Activated T-helper 1 cell treated with anti-CD3 and anti-CD28 coated beads, Interleukin-12 subunit alpha, Interleukin-12 subunit beta, Interleukin-2, Interleukin-4 antibody, amounts not matched to agents 30 ng/mL and 10 ng/mL and 1 ng/mL, durations not matched to agents 14 hours and 24 hours and 36 hours (primary cell): ENCODE measurements at regions of chr10 and their contacts with region 1.

Region 1: GRCh38 chr10:90912174-90912573 is 8.7 kb downstream of the ANKRD1 start:
- DNase-seq: no peak
- H3K4me3 Mint-ChIP-seq: no peak overlapping the region
- H3K27ac Mint-ChIP-seq: no peak overlapping the region
- H3K4me1 Mint-ChIP-seq: no peaks in the 10 kb centered on the region
- H3K27me3 Mint-ChIP-seq: peaks cover 4% of the 10 kb centered on the region

Region 2: DNA sequence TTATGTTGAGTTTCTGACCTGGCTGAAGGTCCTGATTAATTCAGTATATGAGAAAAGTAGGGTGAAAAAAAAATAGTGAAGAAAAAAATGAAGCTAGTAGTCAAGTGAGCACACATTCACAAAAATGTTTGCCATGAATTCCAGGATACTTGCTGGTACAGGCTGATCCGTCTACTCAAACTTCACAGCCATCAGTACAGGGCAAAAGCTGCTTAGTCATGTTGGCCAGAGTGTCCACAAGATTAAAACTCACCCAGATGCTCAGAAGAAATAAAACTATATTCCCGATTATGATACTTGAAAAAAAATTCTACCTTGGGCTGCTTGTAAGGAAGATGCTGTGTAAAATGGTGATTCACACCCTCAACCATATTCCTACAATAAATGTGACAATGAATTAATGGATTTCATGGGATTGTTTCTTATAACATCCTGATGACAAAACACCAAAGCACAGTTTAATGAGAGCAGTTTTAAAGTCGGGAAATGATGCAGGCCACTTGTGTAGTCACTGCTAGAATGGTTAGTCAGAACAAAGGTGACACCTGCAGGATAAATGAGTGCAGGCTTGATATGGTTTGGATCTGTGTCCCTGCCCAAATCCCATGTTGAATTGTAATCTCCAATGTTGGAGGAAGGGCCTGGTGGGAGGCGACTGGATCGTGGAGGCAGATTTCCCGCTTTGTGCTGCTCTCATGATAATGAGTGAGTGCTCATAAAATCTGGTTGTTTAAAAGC is 57.9 kb after region 1 on chr10:
- intact Hi-C with region 1: loop called (anchors 5 kb)
- DNase-seq: no peak
- H3K4me3 Mint-ChIP-seq: no peak overlapping the region
- H3K27ac Mint-ChIP-seq: no peak overlapping the region
- H3K4me1 Mint-ChIP-seq: no peaks in the 10 kb centered on the region
- H3K27me3 Mint-ChIP-seq: peaks cover 5% of the 10 kb centered on the region

Region 3: DNA sequence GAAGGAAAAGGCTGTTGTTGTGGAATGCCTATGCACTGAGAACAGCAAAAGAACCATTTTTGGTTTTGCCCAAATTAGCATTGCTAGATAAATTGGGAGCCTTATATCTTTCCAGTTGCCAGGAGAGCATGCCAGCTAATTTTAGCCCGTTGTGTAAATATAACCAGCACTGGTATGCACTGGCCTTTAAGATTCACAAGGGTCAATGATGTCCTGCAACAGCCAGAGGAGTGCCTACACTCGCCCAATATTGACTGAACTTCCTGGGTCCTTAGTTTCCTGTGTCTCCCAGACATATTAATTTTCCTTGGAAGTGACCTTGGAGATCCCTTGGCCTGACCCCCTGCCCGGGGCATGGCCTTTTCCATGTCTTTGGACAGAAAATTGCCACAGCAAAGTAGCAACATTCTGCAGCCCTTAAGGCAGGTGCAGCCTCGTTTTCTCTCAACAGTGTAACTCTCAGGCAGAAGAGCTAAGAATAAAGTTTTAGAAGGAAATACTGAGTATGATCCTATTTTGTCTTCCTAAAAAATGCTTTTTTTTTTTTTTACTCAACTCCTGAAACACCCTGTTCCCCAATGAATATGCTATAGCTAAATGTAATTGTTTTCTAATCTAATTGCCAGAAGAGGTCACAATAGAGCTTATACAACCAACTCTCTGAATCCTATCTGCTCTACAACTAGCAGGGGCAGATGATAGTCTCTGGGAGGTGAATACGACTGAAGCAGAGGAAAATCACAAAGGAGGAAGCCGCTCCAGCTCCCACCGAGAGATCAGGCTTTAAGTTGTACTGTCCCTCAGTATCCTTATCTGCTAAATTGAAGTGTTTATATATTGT is 176.3 kb after region 1 on chr10:
- intact Hi-C with region 1: loop called (anchors 10 kb)
- DNase-seq: no peak
- H3K4me3 Mint-ChIP-seq: no peak overlapping the region
- H3K27ac Mint-ChIP-seq: no peak overlapping the region
- H3K4me1 Mint-ChIP-seq: no peaks in the 10 kb centered on the region
- H3K27me3 Mint-ChIP-seq: peaks cover 7% of the 10 kb centered on the region

Region 4: DNA sequence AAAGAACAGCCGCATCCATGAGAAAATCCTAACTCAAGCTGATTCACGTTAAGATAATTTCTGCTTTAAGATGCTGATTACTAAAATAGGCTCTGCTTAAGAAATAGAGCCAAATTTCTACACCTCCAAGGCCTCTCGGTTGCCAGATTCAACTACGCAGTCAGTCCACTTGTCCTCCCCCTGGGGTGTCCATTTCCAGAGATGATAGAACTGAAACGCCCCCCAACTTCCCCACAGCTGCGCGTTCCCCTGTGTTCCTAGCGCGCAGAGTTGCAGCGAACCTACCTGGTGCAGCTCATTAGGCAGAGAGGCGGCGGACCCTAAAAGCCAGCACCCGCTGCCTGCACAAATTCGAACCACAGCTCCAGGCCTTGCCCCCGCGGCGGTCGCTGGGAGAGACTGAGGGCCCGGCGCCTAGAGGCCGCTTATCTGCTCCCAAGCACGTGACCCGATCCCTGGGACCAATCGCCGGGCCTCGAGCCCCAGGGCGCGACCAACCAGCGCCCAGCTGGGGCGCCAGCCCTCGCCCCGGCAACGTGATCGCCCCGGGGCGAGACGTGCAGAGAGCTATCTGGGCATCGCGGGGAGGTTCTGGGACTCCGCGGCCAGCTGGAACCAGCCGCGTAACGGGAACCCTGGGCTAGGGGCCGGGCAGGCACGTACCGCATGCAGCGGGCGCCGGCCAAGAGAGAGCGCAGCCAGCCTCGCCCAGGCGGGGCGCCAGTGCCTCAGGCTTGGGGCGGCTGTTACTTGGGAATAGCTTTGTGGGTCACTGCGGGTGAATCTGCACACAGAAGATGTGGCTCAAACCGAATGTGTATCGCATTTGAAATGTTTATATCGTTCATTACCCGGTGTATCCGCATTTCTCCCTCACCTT is 720.7 kb after region 1 on chr10 and contains the start of gene PPP1R3C:
- intact Hi-C with region 1: loop called (anchors 10 kb)
- DNase-seq: peak; percentile 46
- H3K4me3 Mint-ChIP-seq: peak within 1 kb of the TSS; percentile 73
- H3K27ac Mint-ChIP-seq: no peak within 1 kb of the TSS
- H3K4me1 Mint-ChIP-seq: no peaks in the 10 kb centered on the region
- H3K27me3 Mint-ChIP-seq: peaks cover 49% of the 10 kb centered on the region
- total RNA-seq, gene PPP1R3C: not detected in 2 replicates